CD4-positive, alpha-beta memory T cell (primary cell): ENCODE measurements at regions of chr19 and their contacts with region 1.

Region 1: DNA sequence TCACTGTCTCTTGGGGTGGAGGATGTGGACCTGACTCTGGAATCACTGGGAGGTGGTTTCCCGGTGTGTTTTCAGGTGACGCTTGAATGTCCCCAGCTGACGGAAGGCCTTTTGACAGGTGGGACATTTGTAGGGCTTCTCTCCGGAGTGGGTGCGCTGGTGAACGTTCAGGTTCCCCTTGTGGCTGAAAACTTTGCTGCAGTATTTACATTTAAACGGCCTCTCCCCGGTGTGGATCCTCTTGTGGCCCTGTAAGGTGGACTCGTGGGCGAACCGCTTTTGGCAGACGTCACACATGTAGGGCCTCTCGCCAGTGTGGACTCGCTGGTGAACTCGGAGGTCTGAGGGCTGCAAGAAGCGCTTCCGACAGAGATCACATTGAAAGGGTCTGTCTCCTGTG is 7.8 kb downstream of the ZSCAN5B start:
- DNase-seq: no peak
- H3K4me3 ChIP-seq: no peak overlapping the region
- H3K4me3 Mint-ChIP-seq: no peak overlapping the region
- H3K27ac ChIP-seq: no peak overlapping the region
- H3K27ac Mint-ChIP-seq: no peak overlapping the region
- H3K4me1 ChIP-seq: no peaks in the 10 kb centered on the region
- H3K4me1 Mint-ChIP-seq: peaks cover 0 to 7% (median 0%) of the 10 kb centered on the region in 4 donors
- H3K27me3 ChIP-seq: no peaks in the 10 kb centered on the region
- H3K27me3 Mint-ChIP-seq: peaks cover 5 to 18% of the 10 kb centered on the region in 2 donors

Region 2: GRCh38 chr19:56201973-56202372 is 12.2 kb after region 1 on chr19 and contains the start of gene ZSCAN5C:
- CTCF ChIA-PET with region 1: no interaction called
- POLR2A ChIA-PET with region 1: no interaction called
- intact Hi-C with region 1: no loop called
- DNase-seq: no peak
- H3K4me3 ChIP-seq: no peak within 1 kb of the TSS
- H3K4me3 Mint-ChIP-seq: no peak within 1 kb of the TSS
- H3K27ac ChIP-seq: no peak within 1 kb of the TSS
- H3K27ac Mint-ChIP-seq: no peak within 1 kb of the TSS
- H3K4me1 ChIP-seq: no peaks in the 10 kb centered on the region
- H3K4me1 Mint-ChIP-seq: no peaks in the 10 kb centered on the region
- H3K27me3 ChIP-seq: no peaks in the 10 kb centered on the region
- H3K27me3 Mint-ChIP-seq: peaks cover 4 to 12% of the 10 kb centered on the region in 2 donors
- total RNA-seq, gene ZSCAN5C: not detected

Region 3: DNA sequence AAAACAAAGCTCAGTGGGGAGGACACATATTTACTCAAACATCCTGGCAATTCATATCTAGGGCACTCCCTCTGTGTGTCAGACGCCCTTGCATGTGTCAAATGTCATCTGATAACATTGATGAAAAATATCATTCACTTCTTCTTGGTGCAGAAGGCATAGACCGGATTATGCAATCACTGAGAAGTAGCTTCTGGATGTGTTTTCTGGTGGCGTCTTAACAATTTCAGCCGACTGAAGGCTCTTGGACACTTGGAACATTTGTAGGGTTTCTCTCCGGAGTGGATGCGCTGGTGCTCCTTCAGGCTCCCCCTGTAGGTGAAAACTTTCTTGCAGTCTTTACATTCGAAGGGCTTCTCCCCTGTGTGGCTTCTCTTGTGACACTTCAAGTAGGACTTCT is 31.6 kb after region 1 on chr19:
- CTCF ChIA-PET with region 1: no interaction called
- POLR2A ChIA-PET with region 1: no interaction called
- intact Hi-C with region 1: no loop called
- DNase-seq: no peak
- H3K4me3 ChIP-seq: no peak overlapping the region
- H3K4me3 Mint-ChIP-seq: no peak overlapping the region
- H3K27ac ChIP-seq: no peak overlapping the region
- H3K27ac Mint-ChIP-seq: no peak overlapping the region
- H3K4me1 ChIP-seq: no peaks in the 10 kb centered on the region
- H3K4me1 Mint-ChIP-seq: peaks cover 0 to 9% (median 0%) of the 10 kb centered on the region in 4 donors
- H3K27me3 ChIP-seq: no peaks in the 10 kb centered on the region
- H3K27me3 Mint-ChIP-seq: peaks cover 3 to 8% of the 10 kb centered on the region in 2 donors

Region 4: DNA sequence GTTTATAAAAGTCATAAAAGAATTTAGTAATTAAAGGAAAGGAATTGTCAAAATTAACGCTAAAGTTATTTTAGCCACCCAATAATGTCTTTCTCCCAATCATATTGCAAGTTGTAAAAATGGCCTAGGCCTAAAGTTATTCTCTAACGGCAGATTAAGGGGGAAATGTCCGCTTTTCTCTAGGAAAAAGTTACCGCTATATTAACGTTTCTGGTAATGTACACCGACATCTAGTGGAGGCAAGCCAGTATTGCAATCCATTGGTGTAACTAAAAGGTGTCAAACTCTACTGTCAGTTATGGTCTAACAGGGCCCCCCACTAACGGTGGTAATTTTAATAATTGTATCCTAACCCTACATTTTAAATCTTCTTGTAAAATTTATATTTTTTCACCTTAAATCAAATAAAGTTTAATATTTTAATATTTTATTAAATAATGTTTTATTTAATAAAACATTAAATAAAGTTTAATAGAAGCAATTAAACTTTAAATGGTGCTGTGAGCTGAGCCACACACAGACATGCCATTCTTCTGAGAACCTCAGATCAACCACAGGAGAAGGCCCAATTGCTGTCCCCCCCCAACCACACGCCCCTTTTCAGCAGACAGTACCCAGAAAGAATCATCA is 160.7 kb after region 1 on chr19:
- CTCF ChIA-PET with region 1: no interaction called
- POLR2A ChIA-PET with region 1: no interaction called
- intact Hi-C with region 1: loop called (anchors 10 kb)
- DNase-seq: peak; percentile 35 to 57 (median 46)
- H3K4me3 ChIP-seq: no peak overlapping the region
- H3K4me3 Mint-ChIP-seq: no peak overlapping the region
- H3K27ac ChIP-seq: no peak overlapping the region
- H3K27ac Mint-ChIP-seq: no peak overlapping the region
- H3K4me1 ChIP-seq: no peaks in the 10 kb centered on the region
- H3K4me1 Mint-ChIP-seq: peaks cover 0 to 1% (median 0%) of the 10 kb centered on the region in 4 donors
- H3K27me3 ChIP-seq: no peaks in the 10 kb centered on the region
- H3K27me3 Mint-ChIP-seq: peaks cover 1% of the 10 kb centered on the region in 2 donors